K562 (cell line): ENCODE measurements at regions of chr1 and their contacts with region 1.

Region 1: GRCh38 chr1:16440470-16441281 is at the start of gene NECAP2:
- DNase-seq: peak; percentile 93 to 98 (median 94)
- ATAC-seq: peak; percentile 85
- H3K4me3 ChIP-seq: peak within 1 kb of the TSS; percentile 95
- H3K27ac ChIP-seq: peak within 1 kb of the TSS; percentile 77
- H3K4me1 ChIP-seq: peaks cover 37 to 45% of the 10 kb centered on the region in 2 experiments
- H3K27me3 ChIP-seq: no peaks in the 10 kb centered on the region
- CTCF ChIP-seq: peak; percentile 96 to 98 (median 96)
- EP300 ChIP-seq: peak; percentile 72
- POLR2A ChIP-seq: peak; percentile 95
- RAD21 ChIP-seq: peak; percentile 48 to 61
- polyA plus RNA-seq, gene NECAP2: 22.7 to 30.6 TPM

Region 2: DNA sequence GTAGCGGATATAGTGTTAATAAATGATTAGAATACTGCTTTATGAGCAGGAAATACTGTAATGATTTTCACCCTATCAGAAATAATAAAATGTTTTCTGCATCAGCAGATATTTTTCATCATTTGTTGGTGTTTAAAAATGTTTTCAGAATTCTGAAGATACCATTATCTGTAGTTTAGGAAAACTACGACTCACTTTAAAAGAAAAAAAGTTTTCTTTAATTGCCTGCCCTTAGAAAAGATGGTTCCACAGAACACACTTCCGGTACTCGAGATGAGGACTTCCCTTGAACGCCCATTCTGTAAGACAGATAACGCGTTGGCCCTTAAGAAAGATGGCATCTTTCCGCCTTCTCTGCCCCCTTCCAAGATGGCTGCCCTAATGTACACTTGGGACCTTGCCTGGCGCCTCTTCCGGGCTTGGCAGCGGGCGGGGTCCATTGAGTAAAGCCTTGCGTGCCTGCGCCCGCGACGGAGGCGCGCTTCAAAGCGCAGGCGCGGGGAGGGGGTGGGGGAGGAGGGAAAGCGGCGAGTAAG is 73.9 kb before region 1 on chr1 and contains the start of gene SZRD1:
- CTCF ChIA-PET with region 1: no interaction called
- POLR2A ChIA-PET with region 1: interaction called, 3 read pairs
- in situ Hi-C with region 1: no loop called
- intact Hi-C with region 1: loop called (anchors 1 kb)
- DNase-seq: peak; percentile 94 to 100 (median 96)
- ATAC-seq: peak; percentile 92
- H3K4me3 ChIP-seq: peak within 1 kb of the TSS; percentile 87
- H3K27ac ChIP-seq: peak within 1 kb of the TSS; percentile 94
- H3K4me1 ChIP-seq: peaks cover 7 to 14% of the 10 kb centered on the region in 2 experiments; a peak in 3 of 5 replicates
- H3K27me3 ChIP-seq: no peaks in the 10 kb centered on the region
- CTCF ChIP-seq: no peak
- EP300 ChIP-seq: peak; percentile 48; the same call in 1 of the 2 replicates
- POLR2A ChIP-seq: no peak
- RAD21 ChIP-seq: no peak; a peak in 1 of 4 replicates
- polyA plus RNA-seq, gene SZRD1: 3.9 to 7.2 TPM

Region 3: DNA sequence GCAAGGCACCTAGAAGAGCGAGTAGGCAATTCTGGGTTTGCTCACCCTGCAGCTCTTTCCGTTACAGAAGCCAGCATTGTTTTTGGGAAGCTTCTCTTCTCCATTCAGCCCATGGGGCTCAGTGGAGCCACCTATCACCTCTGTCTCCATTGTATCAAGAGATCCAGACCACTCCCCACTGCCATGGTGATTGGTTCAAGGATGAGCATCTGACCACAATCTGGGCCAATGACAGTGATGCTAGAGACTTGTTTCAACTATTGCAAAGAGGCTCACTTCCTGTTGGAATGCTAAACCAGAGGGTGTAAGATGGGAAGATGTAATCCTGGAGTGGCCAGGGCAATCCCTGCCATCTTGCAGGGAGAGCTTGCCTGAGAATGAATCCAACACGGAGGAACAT is 10.1 kb before region 1 on chr1:
- CTCF ChIA-PET with region 1: no interaction called
- POLR2A ChIA-PET with region 1: interaction called, 12 read pairs
- in situ Hi-C with region 1: no loop called
- intact Hi-C with region 1: no loop called
- DNase-seq: peak; percentile 71 to 81 (median 74)
- ATAC-seq: peak; percentile 98
- H3K4me3 ChIP-seq: no peak overlapping the region
- H3K27ac ChIP-seq: no peak overlapping the region; the same call in 2 of the 3 replicates
- H3K4me1 ChIP-seq: peaks cover 6 to 14% of the 10 kb centered on the region in 2 experiments; a peak in 4 of 5 replicates
- H3K27me3 ChIP-seq: no peaks in the 10 kb centered on the region
- CTCF ChIP-seq: peak in 2 of 3 experiments; percentile 38 to 45; a peak in 3 of 6 replicates
- EP300 ChIP-seq: no peak
- POLR2A ChIP-seq: 0 out of 2 replicates have a peak, but pooled peaks have one; percentile 35
- RAD21 ChIP-seq: no peak

Region 4: DNA sequence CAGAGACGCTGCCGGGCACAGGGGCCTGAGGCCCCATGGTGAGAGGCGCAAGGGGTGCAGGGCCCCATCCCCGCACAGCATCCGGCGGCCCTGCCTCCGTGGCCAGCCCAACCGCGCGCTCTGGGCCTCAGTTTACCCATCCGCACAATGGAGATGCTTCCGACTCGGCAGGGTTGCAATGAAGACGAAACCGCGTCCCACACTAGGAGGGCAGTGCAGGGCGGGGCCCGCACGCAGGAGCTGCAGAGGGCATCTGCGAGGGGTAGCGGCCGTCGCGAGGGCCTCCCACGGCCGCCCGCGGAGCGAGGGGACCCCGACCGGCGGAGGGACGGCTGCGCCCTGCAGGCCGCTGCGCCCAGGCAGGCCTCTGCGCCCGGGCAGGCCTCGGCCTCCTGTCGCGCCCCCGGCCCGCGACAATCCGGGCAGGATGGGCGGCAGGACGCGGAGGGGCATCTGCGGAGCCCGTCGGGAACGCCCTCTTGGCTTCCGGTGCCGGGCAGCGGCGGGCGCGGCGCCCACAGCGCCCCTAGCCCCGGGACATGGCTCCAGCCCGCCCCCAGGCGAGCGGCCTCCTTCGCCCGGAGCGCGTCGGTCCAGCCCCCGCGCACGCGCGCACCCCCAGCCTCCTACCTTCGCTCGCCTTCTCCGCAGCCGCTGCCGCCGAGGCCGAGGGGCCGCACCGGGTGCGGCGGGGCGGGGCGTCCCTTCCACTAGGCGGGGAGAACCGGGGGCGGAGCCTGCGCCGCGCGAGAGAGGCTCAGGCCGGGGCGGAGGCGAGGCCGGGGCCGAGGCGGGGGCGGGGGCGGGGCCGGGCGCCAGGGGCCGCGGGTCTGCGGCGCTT is 58.1 kb after region 1 on chr1:
- CTCF ChIA-PET with region 1: no interaction called
- POLR2A ChIA-PET with region 1: interaction called, 3 read pairs
- in situ Hi-C with region 1: no loop called
- intact Hi-C with region 1: loop called (anchors 2 kb)
- DNase-seq: peak; percentile 96 to 100 (median 99)
- ATAC-seq: peak; percentile 98
- H3K4me3 ChIP-seq: peak overlapping the region; percentile 73
- H3K27ac ChIP-seq: peak overlapping the region; percentile 62
- H3K4me1 ChIP-seq: peaks cover 3 to 24% of the 10 kb centered on the region in 2 experiments; a peak in 3 of 5 replicates
- H3K27me3 ChIP-seq: no peaks in the 10 kb centered on the region
- CTCF ChIP-seq: peak in 1 of 3 experiments; percentile 49; a peak in 3 of 6 replicates
- EP300 ChIP-seq: no peak
- POLR2A ChIP-seq: peak; percentile 41; the same call in 1 of the 2 replicates
- RAD21 ChIP-seq: peak in 1 of 2 experiments; percentile 21; a peak in 2 of 4 replicates

Region 5: GRCh38 chr1:16958503-16958902 is 517.8 kb after region 1 on chr1:
- CTCF ChIA-PET with region 1: no interaction called
- POLR2A ChIA-PET with region 1: no interaction called
- in situ Hi-C with region 1: no loop called
- intact Hi-C with region 1: loop called (anchors 5 kb)
- DNase-seq: no peak
- ATAC-seq: no peak
- H3K4me3 ChIP-seq: no peak overlapping the region
- H3K27ac ChIP-seq: no peak overlapping the region
- H3K4me1 ChIP-seq: peaks cover 0 to 33% of the 10 kb centered on the region in 2 experiments; a peak in 2 of 5 replicates
- H3K27me3 ChIP-seq: peaks cover 15 to 32% of the 10 kb centered on the region in 2 experiments; a peak in 4 of 5 replicates
- CTCF ChIP-seq: no peak
- EP300 ChIP-seq: no peak
- POLR2A ChIP-seq: no peak
- RAD21 ChIP-seq: no peak